ENCODE measurements at regions of chr19 and their contacts with region 1.

Region 1: GRCh38 chr19:55516878-55517620 is 19.9 kb downstream of the SBK2 start:
- DNase-seq: peak; percentile 91 to 96
- ATAC-seq: peak; percentile 71 to 88
- H3K4me3 ChIP-seq: peak overlapping the region; percentile 58 to 74 (median 63)
- H3K27ac ChIP-seq: peak overlapping the region; percentile 94 to 99 (median 96)
- H3K4me1 ChIP-seq: peaks cover 19 to 22% of the 10 kb centered on the region in 2 donors
- H3K27me3 ChIP-seq: no peaks in the 10 kb centered on the region
- CTCF ChIP-seq: peak; percentile 87 to 96 (median 94)
- POLR2A ChIP-seq: peak; percentile 72 to 80

Region 2: DNA sequence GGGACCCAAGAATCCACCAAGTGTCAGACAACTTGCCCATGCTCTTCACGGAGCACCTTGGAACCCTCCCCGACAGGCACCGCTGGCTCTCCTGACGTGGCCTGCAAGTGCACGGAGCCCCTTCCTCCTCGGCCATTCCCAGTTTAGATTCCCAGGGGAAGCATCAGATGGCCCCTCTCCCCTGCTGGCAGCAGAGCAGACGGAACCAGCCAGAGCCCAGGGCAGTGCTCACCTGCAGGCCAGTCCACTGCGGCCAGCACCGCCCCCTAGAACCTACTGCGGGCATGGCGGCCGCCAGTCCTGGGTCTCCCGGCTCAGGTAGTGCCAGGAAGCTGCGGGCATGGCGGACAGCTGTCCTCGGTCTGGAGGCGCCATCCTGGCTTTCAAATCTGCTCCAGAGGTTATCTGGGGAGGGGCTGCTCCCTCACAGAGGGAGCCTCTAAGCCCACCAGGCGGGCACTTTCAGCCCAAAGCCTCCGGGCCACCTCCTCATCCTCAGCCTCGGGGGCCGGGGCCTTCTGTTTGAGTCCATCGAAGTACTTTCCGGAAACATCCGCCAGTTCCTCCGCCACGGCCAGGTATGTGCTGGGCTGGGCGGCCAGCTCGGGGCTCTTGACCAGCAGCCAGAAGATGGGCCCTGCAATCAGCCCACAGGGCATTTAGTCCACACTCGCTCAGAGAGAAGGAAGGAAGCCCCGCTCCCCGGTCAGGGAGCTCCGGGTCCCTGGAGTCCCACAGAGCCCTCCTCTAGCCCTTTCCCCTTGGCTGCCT is 472.2 kb before region 1 on chr19:
- in situ Hi-C with region 1: no loop called
- intact Hi-C with region 1: no loop called
- DNase-seq: no peak
- ATAC-seq: no peak
- H3K4me3 ChIP-seq: no peak overlapping the region
- H3K27ac ChIP-seq: no peak overlapping the region
- H3K4me1 ChIP-seq: no peaks in the 10 kb centered on the region
- H3K27me3 ChIP-seq: no peaks in the 10 kb centered on the region
- CTCF ChIP-seq: no peak
- POLR2A ChIP-seq: no peak

Region 3: DNA sequence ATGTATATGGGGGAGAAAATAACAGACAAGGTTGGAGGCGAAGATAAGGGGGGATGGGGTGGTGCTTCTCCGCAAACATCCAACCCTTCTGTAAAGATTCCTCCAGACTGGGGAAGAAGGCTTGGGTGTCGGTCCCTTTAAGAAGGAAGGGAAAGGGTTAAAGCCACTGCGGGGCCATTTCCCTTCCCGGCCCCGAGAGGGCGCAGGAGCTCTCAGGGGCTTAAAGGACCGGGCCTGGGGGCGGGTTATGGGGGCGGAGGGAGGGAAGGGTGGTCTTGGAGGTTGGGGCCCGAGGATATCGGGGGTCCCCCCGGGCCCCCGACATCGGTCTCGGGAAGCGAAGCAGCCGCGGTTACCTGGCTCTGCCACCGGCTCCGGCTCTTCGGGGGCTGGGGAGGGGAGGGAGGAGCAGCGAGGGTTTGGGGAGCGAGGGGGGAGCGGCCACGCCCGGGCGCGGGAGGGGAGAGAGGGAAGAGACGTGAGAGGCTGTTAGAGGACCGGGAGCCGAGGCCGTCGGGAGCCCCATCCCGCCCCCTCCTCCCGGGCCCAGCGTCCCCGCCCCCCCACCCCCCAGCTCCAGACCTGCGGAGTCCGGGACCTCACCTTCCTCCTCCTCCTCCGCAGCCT is 370.9 kb before region 1 on chr19:
- in situ Hi-C with region 1: loop called in 1 of 4 experiments (anchors 10 kb)
- intact Hi-C with region 1: no loop called
- DNase-seq: peak in 1 of 2 donors; percentile 52
- ATAC-seq: no peak
- H3K4me3 ChIP-seq: peak overlapping the region; percentile 48 to 65 (median 56)
- H3K27ac ChIP-seq: peak overlapping the region; percentile 82 to 96 (median 93)
- H3K4me1 ChIP-seq: peaks cover 7 to 30% of the 10 kb centered on the region in 2 donors
- H3K27me3 ChIP-seq: peaks cover 14 to 30% (median 30%) of the 10 kb centered on the region in 3 donors
- CTCF ChIP-seq: peak; percentile 30 to 70 (median 56)
- POLR2A ChIP-seq: no peak

Region 4: DNA sequence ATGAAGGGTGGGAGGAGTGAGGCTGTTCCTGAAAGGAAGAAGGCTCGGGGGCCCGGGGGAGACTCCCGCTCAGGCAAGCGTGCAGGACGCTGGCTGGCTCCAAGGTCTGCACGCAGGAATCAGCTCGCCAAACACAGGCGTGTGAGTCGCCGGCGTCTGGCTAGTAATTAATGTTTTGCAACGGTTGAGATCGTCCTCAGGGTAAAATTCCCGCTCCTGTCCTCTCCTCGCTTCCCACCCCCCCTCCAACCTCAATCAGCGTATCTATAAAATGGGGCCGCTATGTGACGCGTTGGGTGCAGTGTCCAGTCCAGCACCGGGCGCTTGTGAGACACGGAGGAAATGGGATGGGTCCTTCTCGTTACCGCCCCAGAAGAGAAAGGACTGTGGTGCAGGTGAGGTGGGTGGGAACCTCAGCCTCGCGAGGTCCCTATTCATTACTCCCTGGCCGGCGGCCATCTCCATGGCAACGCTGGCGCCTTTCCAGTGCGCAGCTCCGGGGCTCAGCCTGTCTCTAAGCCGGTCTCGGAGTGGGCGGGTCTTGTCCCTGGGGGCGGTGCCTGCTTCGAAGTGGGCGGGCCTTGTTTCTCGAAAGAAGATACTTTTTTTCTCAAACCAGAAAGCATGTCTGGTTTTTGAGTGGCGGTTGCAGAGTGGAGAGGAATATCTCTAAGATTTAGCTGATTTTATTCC is 70.1 kb after region 1 on chr19:
- in situ Hi-C with region 1: loop called in 1 of 4 experiments (anchors 10 kb)
- intact Hi-C with region 1: no loop called
- DNase-seq: peak; percentile 77 to 84
- ATAC-seq: peak; percentile 87 to 91
- H3K4me3 ChIP-seq: peak overlapping the region; percentile 35 to 55 (median 50)
- H3K27ac ChIP-seq: no peak overlapping the region
- H3K4me1 ChIP-seq: peaks cover 18 to 20% of the 10 kb centered on the region in 2 donors
- H3K27me3 ChIP-seq: peaks cover 3 to 11% (median 6%) of the 10 kb centered on the region in 3 donors
- CTCF ChIP-seq: no peak
- POLR2A ChIP-seq: no peak

Region 5: DNA sequence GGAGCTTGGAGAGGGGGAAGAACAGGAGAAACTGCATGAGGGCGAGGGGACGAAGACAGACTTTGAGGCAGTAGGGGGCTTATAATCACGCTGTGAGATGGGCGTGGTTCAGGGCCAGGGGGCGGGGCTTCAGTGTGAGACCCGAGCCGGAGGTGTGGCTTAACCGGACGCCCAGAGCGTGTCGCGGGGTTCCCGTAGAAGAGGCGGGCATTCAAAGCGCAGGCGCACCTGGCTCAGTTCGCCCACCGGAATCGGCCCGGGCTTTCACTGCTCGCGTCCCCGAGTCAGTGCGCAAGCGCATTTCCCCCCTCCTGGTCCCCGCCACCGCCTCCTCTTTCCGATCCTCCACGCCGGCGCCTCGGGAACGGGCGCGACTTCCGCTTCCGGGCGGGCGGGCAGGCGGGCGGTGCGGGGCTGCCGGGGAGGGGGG is 88.2 kb after region 1 on chr19:
- in situ Hi-C with region 1: no loop called
- intact Hi-C with region 1: loop called (anchors 1 kb)
- DNase-seq: peak; percentile 96
- ATAC-seq: peak; percentile 77 to 79
- H3K4me3 ChIP-seq: peak overlapping the region; percentile 68 to 97 (median 80)
- H3K27ac ChIP-seq: peak overlapping the region; percentile 91 to 99 (median 94)
- H3K4me1 ChIP-seq: peaks cover 27 to 38% of the 10 kb centered on the region in 2 donors
- H3K27me3 ChIP-seq: no peaks in the 10 kb centered on the region
- CTCF ChIP-seq: no peak
- POLR2A ChIP-seq: peak in 1 of 2 donors; percentile 36

Region 6: GRCh38 chr19:55624109-55625003 is 107.3 kb after region 1 on chr19 and contains the start of gene ZNF784:
- in situ Hi-C with region 1: loop called in 2 of 4 experiments (anchors 5 kb)
- intact Hi-C with region 1: no loop called
- DNase-seq: peak; percentile 89 to 91
- ATAC-seq: peak; percentile 76 to 83
- H3K4me3 ChIP-seq: peak within 1 kb of the TSS; percentile 71 to 77 (median 74)
- H3K27ac ChIP-seq: peak within 1 kb of the TSS; percentile 97 to 99 (median 98)
- H3K4me1 ChIP-seq: peaks cover 30 to 37% of the 10 kb centered on the region in 2 donors
- H3K27me3 ChIP-seq: no peaks in the 10 kb centered on the region
- CTCF ChIP-seq: no peak
- POLR2A ChIP-seq: peak; percentile 38 to 49
- total RNA-seq, gene ZNF784: 6.0 to 10.0 (median 8.2) TPM

Region 7: GRCh38 chr19:55632463-55632834 is 115.4 kb after region 1 on chr19:
- in situ Hi-C with region 1: loop called (anchors 5 to 10 kb)
- intact Hi-C with region 1: loop called (anchors 1 kb)
- DNase-seq: peak; percentile 82 to 91
- ATAC-seq: peak; percentile 59 to 70
- H3K4me3 ChIP-seq: no peak overlapping the region
- H3K27ac ChIP-seq: peak overlapping the region; percentile 90 to 100 (median 98)
- H3K4me1 ChIP-seq: peaks cover 24 to 27% of the 10 kb centered on the region in 2 donors
- H3K27me3 ChIP-seq: no peaks in the 10 kb centered on the region
- CTCF ChIP-seq: peak; percentile 86 to 95 (median 91)
- POLR2A ChIP-seq: no peak

Measured in gastrocnemius medialis (tissue), 4 donors.